RWPE1 (cell line): ENCODE measurements at regions of chr2 and their contacts with region 1.

Region 1: GRCh38 chr2:175363699-175364098 is 182.2 kb upstream of the ATP5MC3 start:
- DNase-seq: no peak
- H3K27ac ChIP-seq: no peak overlapping the region
- CTCF ChIP-seq: no peak

Region 2: GRCh38 chr2:175037764-175038340 is 325.8 kb before region 1 on chr2:
- CTCF ChIA-PET with region 1: no interaction called
- POLR2A ChIA-PET with region 1: interaction called, 10 read pairs
- DNase-seq: no peak
- H3K27ac ChIP-seq: no peak overlapping the region
- CTCF ChIP-seq: no peak

Region 3: DNA sequence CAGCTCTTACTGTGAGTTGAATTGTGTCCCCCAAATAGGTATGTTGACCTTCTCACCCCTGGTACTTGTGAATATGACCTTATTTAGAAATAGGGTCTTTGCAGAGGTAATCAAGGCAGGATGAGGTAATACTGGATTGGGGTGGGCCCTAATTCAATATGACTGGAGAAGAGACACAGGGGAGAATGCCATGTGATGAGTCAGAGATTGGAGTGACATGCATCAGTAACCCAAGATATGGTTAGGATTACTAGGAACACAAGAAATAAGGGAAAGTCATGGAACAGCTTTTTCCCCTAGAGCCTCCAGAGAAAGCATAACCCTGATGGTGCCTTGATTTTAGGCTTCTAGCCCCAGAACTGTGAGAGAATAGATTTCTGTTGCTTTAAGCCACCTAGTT is 145.1 kb before region 1 on chr2:
- CTCF ChIA-PET with region 1: no interaction called
- POLR2A ChIA-PET with region 1: no interaction called
- DNase-seq: no peak
- H3K27ac ChIP-seq: no peak overlapping the region
- CTCF ChIP-seq: no peak

Region 4: DNA sequence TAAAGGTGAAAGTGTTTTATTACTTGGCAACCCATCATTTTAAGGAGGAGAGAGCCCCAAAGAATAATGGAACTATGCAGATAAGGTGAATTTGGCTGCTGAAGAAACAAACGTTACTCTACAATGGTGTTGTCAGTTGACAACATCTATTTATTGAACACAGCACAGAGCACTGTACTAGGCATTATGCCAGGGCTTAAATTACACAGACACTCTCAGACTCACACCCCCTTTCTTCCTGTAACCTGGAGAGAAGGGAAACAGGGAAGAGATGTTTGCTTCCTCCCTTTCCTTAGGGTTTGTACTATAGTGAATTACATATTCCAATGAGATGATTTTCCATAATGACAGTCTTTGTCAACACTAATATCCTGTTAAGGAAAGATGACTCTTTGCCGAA is 88.2 kb before region 1 on chr2:
- CTCF ChIA-PET with region 1: no interaction called
- POLR2A ChIA-PET with region 1: no interaction called
- DNase-seq: no peak
- H3K27ac ChIP-seq: no peak overlapping the region
- CTCF ChIP-seq: no peak